Heart right ventricle (tissue), 16 donors: ENCODE measurements at regions of chr5 and their contacts with region 1.

Region 1: DNA sequence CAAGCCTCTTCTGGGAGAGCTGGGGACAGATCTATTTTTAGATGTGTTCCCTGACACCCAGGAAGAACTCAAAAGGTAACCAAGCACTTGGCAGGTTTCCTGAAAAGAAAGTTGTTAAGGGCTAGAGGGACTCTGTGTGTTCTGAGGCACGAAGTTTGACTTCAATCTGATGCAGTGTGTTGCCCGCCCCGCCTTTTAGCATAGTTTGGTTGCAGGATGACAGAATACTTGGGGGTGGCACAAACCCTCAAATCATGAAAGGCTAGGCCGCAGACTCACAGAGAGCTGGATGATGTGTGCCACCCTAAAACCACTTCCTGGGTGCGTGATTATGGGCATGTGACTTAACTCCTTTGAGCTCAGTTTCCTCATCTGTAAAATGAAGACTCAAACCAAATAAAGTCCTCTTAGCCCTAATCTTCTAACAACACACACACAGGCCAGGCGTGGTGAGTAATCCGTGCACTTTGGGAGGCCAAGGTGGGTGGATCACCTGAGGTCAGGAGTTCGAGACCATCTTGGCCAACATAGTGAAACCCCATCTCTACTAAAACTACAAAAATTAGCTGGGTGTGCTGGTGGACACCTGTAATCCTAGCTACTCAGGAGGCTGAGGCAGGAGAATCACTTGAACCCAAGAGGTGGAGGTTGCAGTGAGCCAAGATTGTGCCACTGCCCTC is 12.8 kb upstream of the NDFIP1 start:
- DNase-seq: peak in 1 of 2 donors; percentile 39
- ATAC-seq: peak; percentile 54 to 94 (median 88)
- H3K4me3 ChIP-seq: no peak overlapping the region
- H3K27ac ChIP-seq: peak overlapping the region; percentile 62 to 80 (median 76)
- H3K4me1 ChIP-seq: peaks cover 0 to 22% (median 16%) of the 10 kb centered on the region in 9 donors
- H3K27me3 ChIP-seq: no peaks in the 10 kb centered on the region
- CTCF ChIP-seq: no peak

Region 2: GRCh38 chr5:142063878-142064331 is 31.9 kb before region 1 on chr5:
- intact Hi-C with region 1: loop called in 1 of 10 experiments (anchors 2 kb)
- DNase-seq: peak; percentile 77 to 81
- ATAC-seq: peak; percentile 84 to 92 (median 88)
- H3K4me3 ChIP-seq: peak overlapping the region in 7 of 10 donors; percentile 2 to 41 (median 36)
- H3K27ac ChIP-seq: peak overlapping the region in 8 of 10 donors; percentile 31 to 80 (median 71)
- H3K4me1 ChIP-seq: peaks cover 0 to 36% (median 16%) of the 10 kb centered on the region in 9 donors
- H3K27me3 ChIP-seq: no peaks in the 10 kb centered on the region
- CTCF ChIP-seq: no peak

Region 3: DNA sequence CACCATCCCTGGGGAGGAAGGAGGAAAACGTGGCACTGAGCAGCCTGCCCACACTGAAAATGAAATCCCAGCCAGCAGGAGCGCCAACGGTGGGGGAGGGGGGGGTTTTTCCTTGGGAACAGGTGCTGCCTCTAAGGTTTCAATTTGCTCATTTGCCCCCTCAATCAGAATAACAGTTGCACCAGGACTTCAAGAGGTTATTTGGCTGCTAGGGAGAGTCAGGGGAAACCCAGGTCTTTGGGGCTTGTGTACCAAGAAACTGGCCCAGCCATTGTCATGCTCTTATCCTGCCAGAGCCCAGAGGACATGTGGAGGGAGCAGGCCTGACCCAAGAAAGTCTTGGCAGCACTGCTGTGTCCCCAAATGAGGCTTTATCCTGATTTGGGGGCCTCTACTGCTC is 79.2 kb after region 1 on chr5:
- intact Hi-C with region 1: no loop called
- DNase-seq: no peak
- ATAC-seq: peak in 4 of 8 donors; percentile 10 to 25 (median 20)
- H3K4me3 ChIP-seq: no peak overlapping the region
- H3K27ac ChIP-seq: no peak overlapping the region
- H3K4me1 ChIP-seq: peaks cover 0 to 17% (median 0%) of the 10 kb centered on the region in 9 donors
- H3K27me3 ChIP-seq: no peaks in the 10 kb centered on the region
- CTCF ChIP-seq: no peak